Right ventricle myocardium superior (tissue), 1 donor: ENCODE measurements at regions of chr10 and their contacts with region 1.

Region 1: GRCh38 chr10:123967396-123968243 is 76.0 kb upstream of the CPXM2 start:
- DNase-seq: peak; percentile 81
- ATAC-seq: peak; percentile 77

Region 2: DNA sequence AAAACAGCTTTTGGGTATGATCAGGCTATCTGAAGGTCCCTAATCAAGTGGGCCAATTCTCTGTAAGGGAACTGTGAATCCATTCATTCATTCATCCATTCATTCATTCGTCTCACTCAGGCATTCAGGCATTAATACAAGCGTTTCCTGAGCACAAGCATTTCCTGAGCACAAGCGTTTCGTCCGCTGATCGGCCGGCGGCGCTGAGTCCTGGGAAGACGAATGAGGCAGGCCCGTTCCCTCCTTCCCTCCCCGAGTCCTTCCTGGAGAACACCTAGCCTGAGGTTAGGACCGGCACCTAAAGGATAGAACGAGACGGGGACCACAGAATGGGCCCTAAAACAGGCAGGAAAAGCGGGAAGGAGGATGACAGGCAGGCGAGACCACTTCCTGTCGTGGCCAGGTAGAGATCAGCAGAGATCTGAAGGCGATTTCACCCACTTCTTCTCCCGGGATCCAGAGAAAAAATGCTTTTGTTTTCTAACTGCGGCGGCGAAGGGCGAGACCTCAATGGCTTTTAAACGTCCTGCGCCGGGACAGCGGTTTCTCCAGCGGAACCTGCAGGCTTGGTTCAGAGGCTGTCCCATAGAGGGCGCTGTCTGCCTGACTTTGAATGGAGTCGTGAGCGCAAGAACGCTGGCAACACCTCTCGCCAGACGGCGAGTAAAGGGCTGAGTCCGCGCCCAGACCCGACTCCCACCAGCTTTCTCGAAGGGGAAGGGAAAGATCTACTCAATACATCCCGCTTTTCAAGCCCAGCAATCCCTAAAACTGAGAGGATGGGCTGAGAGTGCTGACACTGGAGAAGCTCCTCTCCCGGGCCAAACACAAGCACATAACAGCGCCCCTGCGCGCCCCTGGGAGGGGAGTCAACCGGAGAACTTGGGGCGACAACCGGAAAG is 834.8 kb before region 1 on chr10:
- intact Hi-C with region 1: loop called (anchors 10 kb)
- DNase-seq: peak; percentile 87
- ATAC-seq: peak; percentile 94

Region 3: DNA sequence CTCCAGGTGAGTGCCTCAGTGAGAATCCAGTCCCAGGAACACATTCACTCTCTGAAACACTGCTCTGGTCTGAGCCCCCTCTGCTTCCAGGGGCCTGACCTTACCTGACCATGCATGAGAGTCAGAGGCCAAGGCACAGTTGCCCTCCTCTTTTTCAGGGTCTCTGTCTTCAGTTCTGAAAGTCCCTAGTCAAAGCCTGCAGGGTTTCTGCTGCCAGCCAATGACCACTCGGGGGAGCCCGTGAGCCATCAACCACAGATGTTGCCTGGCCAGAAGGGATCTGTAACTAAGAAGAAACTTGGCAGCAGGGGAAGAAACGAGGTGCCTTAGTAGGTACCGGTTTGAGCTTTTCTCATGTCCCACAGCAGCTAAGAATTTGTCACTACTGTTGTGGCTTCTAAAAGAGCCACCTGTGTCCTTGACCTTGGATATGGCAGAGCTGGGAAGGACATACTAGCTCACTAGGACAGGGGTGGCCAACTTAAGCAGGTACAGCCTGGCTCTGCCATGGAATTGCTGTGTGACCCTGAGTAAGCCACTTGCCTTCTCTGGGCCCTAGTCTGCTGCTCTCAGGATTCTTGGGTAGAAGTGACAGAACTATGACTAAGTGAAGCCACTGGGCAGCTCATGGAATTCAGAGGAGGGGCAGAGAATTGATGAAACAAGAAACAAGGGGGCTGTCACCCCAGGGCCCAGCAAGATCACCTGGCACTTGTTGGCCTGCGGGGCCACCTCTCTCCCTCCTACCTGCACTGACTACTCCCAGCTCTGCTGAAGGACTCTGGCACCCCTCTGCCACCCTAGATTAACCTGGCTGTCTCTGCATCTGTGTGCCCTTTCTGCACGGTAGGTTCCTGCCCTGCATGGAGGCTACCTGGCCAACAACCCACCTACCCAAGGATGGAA is 385.3 kb before region 1 on chr10:
- intact Hi-C with region 1: loop called (anchors 2 kb)
- DNase-seq: peak; percentile 77
- ATAC-seq: peak; percentile 82

Region 4: DNA sequence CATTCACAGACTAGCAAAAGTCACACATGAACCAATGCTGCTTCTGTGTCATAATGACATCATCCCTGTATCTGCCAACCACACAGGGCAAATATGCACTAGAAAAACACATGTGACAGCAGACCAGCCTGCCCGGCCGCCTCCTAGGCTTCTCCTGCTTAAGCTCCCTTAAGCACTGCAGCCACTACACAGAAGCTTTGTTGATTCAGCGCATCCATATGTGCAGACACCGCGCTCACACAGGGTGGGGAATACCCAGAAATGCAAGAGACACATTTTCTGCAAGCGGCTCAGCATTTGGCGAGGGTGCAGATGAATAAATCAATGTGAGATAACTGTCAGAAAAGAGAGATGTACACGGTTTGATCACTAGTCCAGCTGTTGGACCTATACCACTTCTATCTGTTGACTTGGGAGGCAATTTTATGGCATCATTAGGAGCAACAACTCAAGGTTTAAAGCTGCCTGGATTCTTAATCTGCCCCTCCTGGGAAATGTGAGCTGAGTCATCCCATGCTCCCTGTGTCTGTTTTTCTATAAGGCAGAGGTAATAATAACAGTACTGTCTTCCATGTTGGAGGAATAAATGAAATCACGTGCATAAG is 109.4 kb before region 1 on chr10:
- intact Hi-C with region 1: no loop called
- DNase-seq: no peak
- ATAC-seq: no peak

Region 5: GRCh38 chr10:124092860-124093773 is 125.5 kb after region 1 on chr10 and contains the start of gene CHST15:
- intact Hi-C with region 1: no loop called
- DNase-seq: peak; percentile 53
- ATAC-seq: peak; percentile 53
- total RNA-seq, gene CHST15: 3.0 TPM